ENCODE measurements at regions of chr10 and their contacts with region 1.

Region 1: DNA sequence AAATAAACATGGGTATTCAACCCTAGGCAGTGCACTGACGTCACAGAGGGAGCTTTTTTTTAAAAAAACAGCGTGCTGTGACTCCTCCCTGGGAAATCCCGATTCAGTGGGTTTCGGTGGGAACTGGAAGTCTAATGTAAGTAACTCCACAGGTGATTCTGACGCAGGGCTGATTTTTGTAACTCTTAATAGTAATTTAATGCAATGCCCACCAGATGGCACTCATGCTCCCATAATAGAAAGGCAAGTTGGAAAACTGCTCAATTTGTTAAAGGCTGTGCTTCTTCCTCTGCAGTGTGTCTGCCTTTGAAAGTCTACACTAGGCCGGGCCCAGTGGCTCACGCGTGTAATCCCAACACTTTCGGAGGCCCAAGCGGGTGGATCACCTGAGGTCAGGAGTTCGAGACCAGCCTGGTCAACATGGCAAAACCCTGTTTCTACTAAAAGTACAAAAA is 10.9 kb upstream of the RSU1 start:
- DNase-seq: peak; percentile 50 to 74 (median 59)
- H3K4me3 ChIP-seq: no peak overlapping the region
- H3K27ac ChIP-seq: no peak overlapping the region
- H3K4me1 ChIP-seq: no peaks in the 10 kb centered on the region
- H3K27me3 ChIP-seq: no peaks in the 10 kb centered on the region
- CTCF ChIP-seq: peak; percentile 30 to 74 (median 62)
- POLR2A ChIP-seq: no peak

Region 2: GRCh38 chr10:17257466-17258321 is 429.6 kb after region 1 on chr10:
- intact Hi-C with region 1: loop called in 1 of 2 experiments (anchors 5 kb)
- DNase-seq: peak; percentile 47 to 74 (median 68)
- H3K4me3 ChIP-seq: no peak overlapping the region
- H3K27ac ChIP-seq: no peak overlapping the region
- H3K4me1 ChIP-seq: no peaks in the 10 kb centered on the region
- H3K27me3 ChIP-seq: peaks cover 8% of the 10 kb centered on the region
- CTCF ChIP-seq: peak; percentile 70 to 90 (median 88)
- POLR2A ChIP-seq: no peak

Region 3: DNA sequence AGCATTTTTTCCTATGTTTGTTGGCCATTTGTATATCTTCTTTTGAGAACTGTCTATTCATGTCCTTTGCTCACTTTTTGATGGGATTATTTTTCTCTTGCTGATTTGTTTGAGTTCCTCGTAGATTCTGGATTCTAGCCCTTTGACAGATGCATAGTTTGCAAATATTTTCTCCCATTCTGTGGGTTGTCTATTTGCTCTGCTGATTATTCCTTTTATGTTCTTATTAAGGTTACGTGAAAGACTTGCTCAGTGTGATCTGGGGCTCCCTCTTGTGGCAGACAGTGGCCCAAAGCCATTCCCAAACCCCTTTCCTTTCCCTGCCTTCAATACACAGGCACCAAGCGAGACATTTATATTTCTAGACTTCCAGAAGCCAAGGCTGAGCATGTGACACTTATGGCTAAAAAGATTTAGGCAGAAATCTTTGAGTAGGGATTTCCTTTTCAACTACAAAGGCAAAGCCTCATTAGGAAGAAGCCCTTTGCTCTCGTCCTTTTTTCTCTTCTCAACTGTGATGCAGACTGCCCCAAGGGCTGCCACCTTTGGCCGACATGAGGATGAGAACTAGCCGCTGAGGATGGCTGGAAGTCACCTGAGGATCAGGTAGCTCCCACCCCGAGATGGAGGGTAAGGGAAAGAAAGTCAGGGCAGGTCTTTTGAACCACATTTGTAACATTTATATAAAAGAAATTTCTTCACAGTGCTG is 602.7 kb after region 1 on chr10:
- intact Hi-C with region 1: loop called in 1 of 2 experiments (anchors 10 kb)
- DNase-seq: peak; percentile 62 to 92 (median 74)
- H3K4me3 ChIP-seq: no peak overlapping the region
- H3K27ac ChIP-seq: no peak overlapping the region
- H3K4me1 ChIP-seq: no peaks in the 10 kb centered on the region
- H3K27me3 ChIP-seq: peaks cover 11% of the 10 kb centered on the region
- CTCF ChIP-seq: peak; percentile 67 to 91 (median 80)
- POLR2A ChIP-seq: no peak

Measured in adrenal gland (tissue), 19 donors.